Colonic mucosa (tissue), 4 donors: ENCODE measurements at regions of chr14 and their contacts with region 1.

Region 1: GRCh38 chr14:37985826-37986470 is 221.8 kb upstream of the SSTR1 start:
- DNase-seq: peak; percentile 46
- H3K4me3 ChIP-seq: no peak overlapping the region
- H3K27ac ChIP-seq: no peak overlapping the region
- H3K4me1 ChIP-seq: no peaks in the 10 kb centered on the region
- H3K27me3 ChIP-seq: no peaks in the 10 kb centered on the region
- CTCF ChIP-seq: peak; percentile 59

Region 2: DNA sequence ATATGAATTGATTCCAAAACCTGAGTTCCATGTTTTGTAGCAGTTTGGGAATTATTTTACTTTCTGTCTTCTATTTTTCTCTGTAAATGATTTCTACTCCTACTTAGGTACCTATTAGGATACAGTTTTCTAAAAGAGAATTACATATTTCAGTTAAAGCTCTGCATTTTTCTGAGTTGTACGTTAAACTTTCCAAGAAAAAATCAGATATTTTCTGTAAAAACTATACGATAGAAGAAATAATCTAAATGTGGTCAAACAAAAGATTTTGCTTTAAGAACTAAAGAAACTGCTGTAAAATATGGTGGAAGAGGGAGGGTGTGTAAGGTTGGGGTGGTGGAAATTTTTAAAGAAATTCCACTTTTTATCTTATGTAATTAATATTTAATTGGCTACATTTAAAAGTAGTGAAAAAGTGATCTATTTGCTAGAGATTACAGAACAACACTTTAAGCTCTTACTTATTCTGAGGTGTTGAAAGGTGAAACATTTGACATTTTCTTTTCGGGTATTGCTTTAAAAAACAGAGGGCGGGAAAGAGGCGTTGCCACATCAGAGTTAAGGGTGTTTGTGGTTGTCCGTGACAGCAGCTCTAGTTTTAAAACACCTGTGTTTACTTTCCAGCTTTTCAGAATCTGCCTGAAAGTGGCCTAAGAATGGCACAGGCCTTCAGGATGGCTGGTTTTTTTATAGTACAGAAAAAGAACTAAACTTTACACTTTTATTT is 600.9 kb before region 1 on chr14:
- intact Hi-C with region 1: no loop called
- DNase-seq: peak; percentile 49
- H3K4me3 ChIP-seq: no peak overlapping the region
- H3K27ac ChIP-seq: no peak overlapping the region
- H3K4me1 ChIP-seq: no peaks in the 10 kb centered on the region
- H3K27me3 ChIP-seq: no peaks in the 10 kb centered on the region
- CTCF ChIP-seq: no peak

Region 3: DNA sequence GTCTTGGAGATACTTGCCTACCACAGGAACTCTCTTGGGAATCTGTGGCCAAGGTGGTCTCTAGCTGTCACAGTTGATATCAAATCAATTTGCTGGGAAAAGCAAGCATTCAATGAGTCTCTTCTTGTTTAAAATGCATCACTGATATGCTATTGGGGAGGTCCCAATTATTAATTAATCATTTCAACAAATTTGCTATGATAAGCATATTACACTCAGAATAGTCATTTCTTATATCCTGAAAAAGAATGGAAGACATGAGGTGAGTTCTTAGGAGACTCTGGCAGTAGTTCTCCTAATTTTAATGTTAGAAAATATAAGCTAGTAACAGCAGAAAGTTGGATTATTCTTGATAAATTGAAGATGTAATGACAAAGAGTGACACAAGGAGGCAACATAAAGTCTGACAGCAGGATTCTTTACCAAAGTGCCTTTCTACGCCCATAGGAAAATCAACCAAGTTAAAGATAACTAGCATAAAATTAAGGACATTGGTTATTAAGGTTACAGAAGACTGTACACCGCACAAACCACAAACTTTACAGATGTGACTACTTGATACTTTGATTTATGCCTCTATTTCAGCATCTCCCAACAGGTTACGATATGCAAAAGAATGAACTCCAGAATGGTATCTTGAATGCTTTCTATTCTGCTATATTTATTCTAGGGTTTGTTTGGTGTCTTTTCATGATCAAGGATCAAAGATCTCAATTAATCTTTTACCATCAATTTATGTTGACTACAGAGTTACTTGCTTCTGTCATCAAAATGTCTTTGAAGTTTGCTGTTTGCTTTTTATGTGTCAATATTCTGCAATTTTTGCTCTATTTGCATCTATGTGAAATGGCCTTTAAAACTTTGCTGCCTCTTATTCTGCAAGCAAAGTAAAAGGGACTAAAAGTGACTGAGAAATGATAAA is 619.5 kb after region 1 on chr14:
- intact Hi-C with region 1: loop called (anchors 10 kb)
- DNase-seq: no peak
- H3K4me3 ChIP-seq: no peak overlapping the region
- H3K27ac ChIP-seq: no peak overlapping the region
- H3K4me1 ChIP-seq: no peaks in the 10 kb centered on the region
- H3K27me3 ChIP-seq: no peaks in the 10 kb centered on the region
- CTCF ChIP-seq: no peak